ENCODE measurements at regions of chr19 and their contacts with region 1.

Region 1: DNA sequence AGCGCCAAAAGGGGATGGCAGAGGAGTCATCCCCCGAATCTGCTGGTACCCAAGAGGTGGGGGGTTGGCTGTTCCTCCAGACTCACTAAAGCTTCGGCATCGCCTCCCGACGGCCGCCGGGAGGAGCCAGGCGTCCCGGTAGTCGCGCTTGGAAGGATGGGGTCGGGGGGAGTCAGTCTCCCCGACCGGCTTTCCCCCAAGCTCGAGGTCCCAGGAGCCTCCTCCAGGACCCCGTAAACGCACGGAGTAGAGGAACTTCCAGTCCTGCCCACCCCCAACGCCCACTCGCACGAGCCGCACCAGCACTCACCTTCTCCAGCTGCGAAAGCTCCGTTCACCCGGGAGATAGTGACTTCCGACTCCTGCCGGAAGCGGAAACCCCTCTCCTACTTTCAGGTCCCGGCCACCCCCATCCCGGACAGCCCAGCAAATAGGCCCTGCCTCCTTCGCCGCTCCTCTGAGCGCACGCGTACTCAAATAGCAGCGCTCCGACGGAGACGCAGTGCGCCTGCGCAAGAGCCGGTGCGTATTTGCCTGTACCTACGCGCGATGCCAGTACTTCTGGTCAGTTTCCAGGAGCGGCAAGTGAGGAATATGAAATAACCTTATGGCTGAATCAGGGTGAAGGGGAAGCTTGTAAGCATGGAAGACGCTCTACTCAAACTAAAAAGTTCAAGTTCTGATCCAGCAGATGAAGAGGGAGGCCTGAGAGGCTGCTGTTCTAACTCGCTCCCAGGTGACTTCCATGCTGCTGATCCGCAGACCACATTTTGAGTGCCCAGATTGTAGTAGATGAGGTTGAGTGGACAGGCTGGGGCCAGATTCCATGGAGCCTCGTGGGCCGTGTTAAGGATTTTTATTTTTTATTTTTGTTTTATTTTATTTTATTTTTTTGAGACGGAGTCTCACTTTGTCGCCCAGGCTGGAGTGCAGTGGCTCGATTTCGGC is at the start of gene ELOF1:
- DNase-seq: peak; percentile 98
- H3K4me3 Mint-ChIP-seq: peak within 1 kb of the TSS; percentile 89
- H3K27ac Mint-ChIP-seq: peak within 1 kb of the TSS; percentile 82
- H3K4me1 Mint-ChIP-seq: peaks cover 47% of the 10 kb centered on the region
- H3K27me3 Mint-ChIP-seq: no peaks in the 10 kb centered on the region

Region 2: GRCh38 chr19:11574689-11575088 is 15.5 kb after region 1 on chr19:
- CTCF ChIA-PET with region 1: interaction called, 127 read pairs
- DNase-seq: no peak
- H3K4me3 Mint-ChIP-seq: no peak overlapping the region
- H3K27ac Mint-ChIP-seq: no peak overlapping the region
- H3K4me1 Mint-ChIP-seq: peaks cover 21% of the 10 kb centered on the region
- H3K27me3 Mint-ChIP-seq: no peaks in the 10 kb centered on the region

Region 3: DNA sequence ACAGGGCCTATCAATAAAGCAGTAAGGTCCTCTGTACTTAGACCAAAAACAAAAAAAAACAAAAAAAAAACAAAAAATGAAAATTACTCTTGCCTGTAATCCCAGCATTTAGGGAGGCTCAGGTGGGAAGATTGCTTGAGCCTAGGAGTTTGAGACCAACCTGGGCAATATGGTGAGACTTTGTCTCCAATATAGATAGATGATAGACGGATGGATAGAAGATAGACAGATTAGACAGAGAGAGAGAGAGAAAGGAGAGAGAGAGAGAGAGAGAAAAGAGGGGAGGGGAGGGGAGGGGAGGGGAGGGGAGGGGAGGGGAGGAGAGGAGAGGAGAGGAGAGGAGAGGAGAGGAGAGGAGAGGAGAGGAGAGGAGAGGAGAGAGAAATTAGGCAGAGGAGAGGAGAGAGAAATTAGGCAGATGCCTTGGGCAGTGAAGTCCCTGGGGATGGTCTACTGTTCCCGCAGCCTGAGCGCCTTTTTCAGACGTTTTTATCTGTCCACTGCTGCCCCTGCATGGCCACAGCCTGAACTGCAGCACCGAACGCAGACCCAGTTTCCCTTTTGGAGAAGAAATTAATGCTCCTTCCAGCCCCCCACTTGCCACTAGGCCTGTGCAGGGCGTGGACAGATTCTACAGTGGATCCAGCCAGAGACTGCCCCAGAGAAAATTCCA is 28.3 kb after region 1 on chr19:
- CTCF ChIA-PET with region 1: interaction called, 127 read pairs
- DNase-seq: peak; percentile 85
- H3K4me3 Mint-ChIP-seq: no peak overlapping the region
- H3K27ac Mint-ChIP-seq: peak overlapping the region; percentile 12
- H3K4me1 Mint-ChIP-seq: peaks cover 9% of the 10 kb centered on the region
- H3K27me3 Mint-ChIP-seq: peaks cover 21% of the 10 kb centered on the region

Measured in activated naive CD4-positive, alpha-beta T cell treated with anti-CD3 and anti-CD28 coated beads, Interleukin-2, amount 10 ng/mL, durations not matched to agents 7 days and 5 days (primary cell).